Astrocyte of the cerebellum (primary cell): ENCODE measurements at regions of chr3 and their contacts with region 1.

Region 1: DNA sequence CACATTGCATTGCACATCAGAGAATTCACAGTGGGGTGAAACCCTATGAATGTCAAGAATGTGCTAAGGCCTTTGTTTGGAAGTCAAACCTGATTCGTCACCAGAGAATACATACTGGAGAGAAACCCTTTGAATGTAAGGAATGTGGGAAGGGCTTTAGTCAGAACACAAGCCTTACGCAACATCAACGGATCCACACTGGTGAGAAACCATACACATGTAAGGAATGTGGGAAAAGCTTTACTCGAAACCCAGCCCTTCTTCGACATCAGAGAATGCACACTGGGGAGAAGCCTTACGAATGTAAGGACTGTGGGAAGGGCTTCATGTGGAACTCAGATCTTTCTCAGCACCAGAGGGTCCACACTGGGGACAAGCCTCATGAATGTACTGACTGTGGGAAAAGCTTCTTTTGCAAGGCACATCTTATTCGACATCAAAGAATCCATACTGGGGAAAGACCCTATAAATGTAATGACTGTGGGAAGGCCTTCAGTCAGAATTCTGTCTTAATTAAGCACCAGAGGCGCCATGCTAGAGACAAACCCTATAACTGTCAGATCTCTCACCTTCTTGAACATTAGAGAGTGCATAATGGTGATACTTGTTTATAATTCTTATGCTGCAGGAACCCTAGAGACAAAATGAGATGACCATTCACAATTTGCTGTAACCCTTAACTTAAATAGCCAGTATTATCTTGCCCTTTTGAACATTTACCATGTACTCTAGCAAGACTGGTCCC is 9.0 kb downstream of the ZNF662 start:
- DNase-seq: no peak
- H3K4me3 ChIP-seq: no peak overlapping the region
- CTCF ChIP-seq: no peak

Region 2: GRCh38 chr3:42864321-42864950 is 50.5 kb before region 1 on chr3:
- in situ Hi-C with region 1: loop called (anchors 5 kb)
- DNase-seq: no peak
- H3K4me3 ChIP-seq: no peak overlapping the region
- CTCF ChIP-seq: no peak